ENCODE measurements at regions of chr10 and their contacts with region 1.

Region 1: DNA sequence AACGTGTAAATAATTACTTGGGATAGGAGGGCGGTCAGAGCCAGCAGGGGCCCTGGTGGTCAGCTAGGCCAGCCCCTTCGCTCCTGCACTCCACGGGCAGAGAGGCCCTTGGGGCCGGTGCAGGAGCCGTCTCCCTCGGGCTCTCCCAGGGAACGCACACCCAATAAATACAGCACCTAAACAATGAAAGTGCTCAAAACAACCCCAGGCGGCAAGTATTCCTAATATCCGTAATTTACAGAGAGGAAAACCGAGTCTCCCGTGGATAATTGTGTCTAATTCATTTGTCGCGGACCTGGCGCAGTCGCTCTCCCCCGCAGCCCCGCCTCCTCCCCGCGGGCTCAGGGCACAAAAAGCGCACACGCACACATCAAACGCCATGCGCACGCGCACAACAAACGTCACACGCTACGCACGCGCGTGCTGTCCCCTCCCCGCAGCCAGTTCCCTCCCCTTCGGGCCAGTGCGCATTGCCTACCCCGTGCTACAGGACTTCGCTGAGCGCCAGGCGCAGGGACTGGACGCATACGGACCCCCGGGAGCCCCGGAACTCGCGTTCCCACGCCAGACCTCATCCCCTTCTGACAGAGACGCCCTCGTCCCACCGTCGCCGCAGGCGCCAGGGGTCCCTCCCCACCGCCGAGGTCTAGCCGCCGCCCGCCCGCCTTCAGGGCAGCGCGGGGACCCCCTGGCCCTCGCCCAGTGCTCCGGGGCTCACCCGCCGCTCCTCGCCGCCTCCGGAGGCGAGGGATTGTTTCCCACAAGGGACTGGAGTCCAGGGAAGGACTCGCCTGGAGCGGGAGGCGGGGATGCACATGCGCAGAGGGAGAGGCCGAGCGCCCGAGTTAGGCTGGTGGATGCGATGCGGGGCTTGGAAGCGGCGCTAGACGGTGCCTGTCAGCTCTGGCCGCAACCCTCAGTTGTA is at the start of gene ZNF248:
- DNase-seq: peak; percentile 98
- H3K4me3 ChIP-seq: peak within 1 kb of the TSS; percentile 71
- H3K4me3 Mint-ChIP-seq: peak within 1 kb of the TSS; percentile 94
- H3K27ac Mint-ChIP-seq: peak within 1 kb of the TSS; percentile 90
- H3K4me1 ChIP-seq: peaks cover 14% of the 10 kb centered on the region; the same call in 1 of the 2 replicates
- H3K4me1 Mint-ChIP-seq: peaks cover 27% of the 10 kb centered on the region
- H3K27me3 ChIP-seq: no peaks in the 10 kb centered on the region
- H3K27me3 Mint-ChIP-seq: no peaks in the 10 kb centered on the region
- CTCF ChIP-seq: peak in 1 of 2 experiments; percentile 29
- total RNA-seq, gene ZNF248: 16.7 and 17.6 TPM in 2 replicates

Region 2: DNA sequence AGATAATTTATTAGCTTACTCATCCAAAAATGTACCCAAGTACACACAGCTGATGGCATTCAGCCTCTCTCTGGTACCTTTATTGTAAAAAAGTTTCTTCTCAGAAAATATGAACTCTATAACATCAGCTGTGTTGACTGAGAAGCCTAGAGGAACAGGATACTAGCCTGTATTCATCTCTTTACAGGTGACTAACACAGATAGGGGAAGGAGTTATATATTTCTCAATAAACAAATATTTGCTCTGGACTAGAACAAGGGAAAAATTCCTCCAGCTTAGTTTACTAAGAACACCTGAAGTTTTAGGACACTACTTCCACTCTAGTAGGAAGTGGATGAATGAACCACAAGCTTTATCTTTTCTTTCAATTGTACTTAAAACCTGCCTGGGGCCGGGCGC is 68.0 kb before region 1 on chr10:
- CTCF ChIA-PET with region 1: no interaction called
- POLR2A ChIA-PET with region 1: no interaction called
- intact Hi-C with region 1: loop called (anchors 1 kb)
- DNase-seq: peak in 1 of 2 experiments; percentile 53
- H3K4me3 ChIP-seq: no peak overlapping the region
- H3K4me3 Mint-ChIP-seq: peak overlapping the region; percentile 44
- H3K27ac Mint-ChIP-seq: peak overlapping the region; percentile 55
- H3K4me1 ChIP-seq: 0 out of 2 replicates have a peak, but pooled peaks cover 10% of the 10 kb centered on the region
- H3K4me1 Mint-ChIP-seq: peaks cover 7% of the 10 kb centered on the region
- H3K27me3 ChIP-seq: no peaks in the 10 kb centered on the region
- H3K27me3 Mint-ChIP-seq: no peaks in the 10 kb centered on the region
- CTCF ChIP-seq: no peak

Region 3: GRCh38 chr10:37839243-37839642 is 18.3 kb before region 1 on chr10:
- CTCF ChIA-PET with region 1: no interaction called
- POLR2A ChIA-PET with region 1: no interaction called
- intact Hi-C with region 1: loop called (anchors 1 kb)
- DNase-seq: no peak
- H3K4me3 ChIP-seq: no peak overlapping the region
- H3K4me3 Mint-ChIP-seq: no peak overlapping the region
- H3K27ac Mint-ChIP-seq: no peak overlapping the region
- H3K4me1 ChIP-seq: 0 out of 2 replicates have a peak, but pooled peaks cover 4% of the 10 kb centered on the region
- H3K4me1 Mint-ChIP-seq: no peaks in the 10 kb centered on the region
- H3K27me3 ChIP-seq: no peaks in the 10 kb centered on the region
- H3K27me3 Mint-ChIP-seq: no peaks in the 10 kb centered on the region
- CTCF ChIP-seq: no peak

Region 4: GRCh38 chr10:37976091-37976879 is 118.7 kb after region 1 on chr10 and contains the start of gene ZNF25:
- CTCF ChIA-PET with region 1: no interaction called
- POLR2A ChIA-PET with region 1: interaction called, 3 read pairs
- intact Hi-C with region 1: loop called (anchors 1 kb)
- DNase-seq: peak; percentile 100
- H3K4me3 ChIP-seq: peak within 1 kb of the TSS; percentile 89
- H3K4me3 Mint-ChIP-seq: peak within 1 kb of the TSS; percentile 81
- H3K27ac Mint-ChIP-seq: peak within 1 kb of the TSS; percentile 94
- H3K4me1 ChIP-seq: no peaks in the 10 kb centered on the region
- H3K4me1 Mint-ChIP-seq: peaks cover 7% of the 10 kb centered on the region
- H3K27me3 ChIP-seq: no peaks in the 10 kb centered on the region
- H3K27me3 Mint-ChIP-seq: no peaks in the 10 kb centered on the region
- CTCF ChIP-seq: peak; percentile 94 to 99
- total RNA-seq, gene ZNF25: 1.5 and 1.7 TPM in 2 replicates

Region 5: DNA sequence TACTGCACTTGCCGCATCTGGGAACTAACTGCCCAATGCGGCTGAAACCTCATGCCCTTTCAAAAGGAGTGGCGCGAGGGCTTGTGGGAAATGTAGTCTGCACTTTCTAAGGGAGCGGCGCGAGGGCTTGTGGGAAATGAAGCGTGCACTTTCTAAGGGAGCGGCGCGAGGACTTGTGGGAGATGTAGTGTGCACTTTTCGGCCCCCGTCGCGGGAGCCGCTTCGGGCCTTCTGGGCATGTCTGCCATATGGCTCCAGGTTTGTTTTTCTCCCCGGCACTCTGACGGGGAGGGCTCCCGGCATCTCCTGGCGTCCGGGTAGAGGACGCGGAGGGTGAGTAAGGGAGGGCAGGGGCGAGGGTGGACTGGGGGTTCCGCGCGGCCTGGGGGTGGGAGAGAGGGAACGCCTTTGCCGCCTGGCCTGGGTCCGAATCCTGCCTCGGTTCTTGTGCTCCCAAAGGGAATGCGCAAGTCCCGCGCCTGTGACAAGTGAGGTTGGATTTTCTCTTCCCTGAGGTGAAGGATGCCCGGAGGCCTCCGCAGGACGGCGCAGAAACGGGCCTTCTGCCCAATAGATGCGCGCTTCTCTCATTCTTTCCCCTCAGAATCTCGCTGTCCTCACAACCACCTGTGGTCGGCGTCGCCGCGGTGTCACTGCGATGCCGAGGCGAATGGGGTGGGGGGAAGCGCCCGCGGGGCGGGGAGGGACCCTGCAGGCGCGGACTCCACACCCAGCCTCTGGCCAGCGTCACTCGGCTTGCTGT is 236.8 kb after region 1 on chr10 and contains the start of gene ZNF37A:
- CTCF ChIA-PET with region 1: no interaction called
- POLR2A ChIA-PET with region 1: no interaction called
- intact Hi-C with region 1: loop called (anchors 1 kb)
- DNase-seq: peak; percentile 93 to 96
- H3K4me3 ChIP-seq: peak within 1 kb of the TSS; percentile 99
- H3K4me3 Mint-ChIP-seq: peak within 1 kb of the TSS; percentile 86
- H3K27ac Mint-ChIP-seq: peak within 1 kb of the TSS; percentile 88
- H3K4me1 ChIP-seq: peaks cover 9% of the 10 kb centered on the region; the same call in 1 of the 2 replicates
- H3K4me1 Mint-ChIP-seq: peaks cover 7% of the 10 kb centered on the region
- H3K27me3 ChIP-seq: no peaks in the 10 kb centered on the region
- H3K27me3 Mint-ChIP-seq: no peaks in the 10 kb centered on the region
- CTCF ChIP-seq: no peak
- total RNA-seq, gene ZNF37A: 14.0 and 15.1 TPM in 2 replicates

Measured in Caco-2 (cell line).